ENCODE measurements at regions of chr7 and their contacts with region 1.

Region 1: DNA sequence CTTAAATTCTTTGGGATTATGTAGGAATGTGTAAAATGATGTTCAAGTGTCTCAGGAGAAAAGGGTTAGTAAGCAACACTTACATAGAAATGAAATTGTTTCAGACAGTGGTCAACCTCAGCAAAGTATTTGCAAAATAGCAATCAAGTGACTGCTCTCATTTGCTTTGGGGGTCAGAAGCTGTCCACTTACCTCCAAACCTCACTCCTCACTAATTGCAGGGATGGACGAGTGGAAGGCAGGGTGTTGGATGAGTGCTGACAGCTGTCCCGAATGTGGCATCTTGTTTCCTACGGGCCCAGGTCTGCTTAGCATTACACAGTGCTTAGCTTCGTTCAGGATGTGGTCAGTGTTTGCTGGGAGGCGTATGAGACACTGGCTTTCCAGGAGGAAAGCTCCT is 437.0 kb downstream of the SUGCT start:
- DNase-seq: no peak
- H3K4me3 ChIP-seq: no peak overlapping the region
- H3K27ac ChIP-seq: no peak overlapping the region
- H3K4me1 ChIP-seq: no peaks in the 10 kb centered on the region
- H3K27me3 ChIP-seq: no peaks in the 10 kb centered on the region
- CTCF ChIP-seq: no peak
- EP300 ChIP-seq: no peak
- POLR2A ChIP-seq: no peak

Region 2: GRCh38 chr7:41437257-41438196 is 865.7 kb after region 1 on chr7:
- in situ Hi-C with region 1: no loop called
- intact Hi-C with region 1: loop called (anchors 2 kb)
- DNase-seq: no peak
- H3K4me3 ChIP-seq: no peak overlapping the region
- H3K27ac ChIP-seq: no peak overlapping the region
- H3K4me1 ChIP-seq: no peaks in the 10 kb centered on the region
- H3K27me3 ChIP-seq: no peaks in the 10 kb centered on the region
- CTCF ChIP-seq: no peak
- EP300 ChIP-seq: no peak
- POLR2A ChIP-seq: no peak

Measured in transverse colon (tissue), 4 donors.